ENCODE measurements at regions of chr2 and their contacts with region 1.

Region 1: GRCh38 chr2:217510771-217511291 is 492.0 kb downstream of the TNS1 start:
- H3K4me3 ChIP-seq: no peak overlapping the region
- H3K27ac ChIP-seq: no peak overlapping the region
- H3K4me1 ChIP-seq: no peaks in the 10 kb centered on the region
- CTCF ChIP-seq: peak; percentile 89

Region 2: GRCh38 chr2:216692636-216693413 is 818.0 kb before region 1 on chr2:
- CTCF ChIA-PET with region 1: interaction called, 11 read pairs
- POLR2A ChIA-PET with region 1: no interaction called
- H3K4me3 ChIP-seq: peak overlapping the region; percentile 56
- H3K27ac ChIP-seq: peak overlapping the region; percentile 92
- H3K4me1 ChIP-seq: peaks cover 36% of the 10 kb centered on the region
- CTCF ChIP-seq: no peak

Region 3: GRCh38 chr2:217142649-217143266 is 368.1 kb before region 1 on chr2:
- CTCF ChIA-PET with region 1: interaction called, 11 read pairs
- POLR2A ChIA-PET with region 1: no interaction called
- H3K4me3 ChIP-seq: no peak overlapping the region
- H3K27ac ChIP-seq: no peak overlapping the region
- H3K4me1 ChIP-seq: no peaks in the 10 kb centered on the region
- CTCF ChIP-seq: no peak

Region 4: DNA sequence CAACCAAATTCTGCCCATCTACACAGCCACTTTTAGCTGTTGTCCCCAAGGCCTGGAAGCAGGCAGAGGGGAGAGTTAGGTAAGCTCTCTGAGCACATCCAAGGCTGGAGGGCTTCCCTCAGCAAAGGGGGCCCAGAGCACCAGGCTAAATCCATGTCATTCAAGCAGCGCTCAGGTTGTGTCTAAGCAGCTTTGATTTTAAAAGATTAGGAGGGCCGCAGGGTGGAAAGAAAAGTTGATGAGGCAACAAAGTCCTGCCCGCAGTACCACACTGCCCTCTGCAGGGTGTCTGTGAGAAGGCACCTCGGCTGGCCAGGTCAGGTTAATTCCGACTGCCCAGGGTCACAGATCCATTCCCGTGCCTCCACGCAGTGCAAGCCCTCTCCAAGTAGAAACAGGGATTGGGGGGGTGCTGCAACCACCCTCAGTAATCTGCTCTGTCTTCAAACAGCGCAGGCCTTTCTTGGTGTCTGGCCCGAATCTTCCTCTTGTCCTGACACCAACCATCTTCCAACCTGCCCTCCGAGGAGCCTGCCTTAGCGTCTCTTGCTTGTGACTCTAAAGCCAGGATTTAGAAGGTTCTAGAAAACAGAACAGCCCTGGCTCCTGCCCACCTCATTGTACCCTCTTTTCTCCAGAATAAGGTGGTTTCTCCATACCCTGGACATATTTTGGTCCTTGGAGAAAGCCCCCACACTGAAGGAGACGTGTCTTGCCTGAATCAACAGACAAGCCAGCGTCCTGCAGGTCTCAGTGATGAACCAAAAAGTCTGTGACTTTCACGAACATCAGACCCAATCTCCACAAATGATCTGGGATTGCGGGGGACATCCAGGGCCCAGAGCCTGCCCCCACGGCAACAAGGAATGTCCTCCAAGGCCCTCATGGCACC is 202.8 kb after region 1 on chr2:
- CTCF ChIA-PET with region 1: interaction called, 22 read pairs
- POLR2A ChIA-PET with region 1: interaction called, 3 read pairs
- H3K4me3 ChIP-seq: no peak overlapping the region
- H3K27ac ChIP-seq: no peak overlapping the region
- H3K4me1 ChIP-seq: no peaks in the 10 kb centered on the region
- CTCF ChIP-seq: peak; percentile 88

Region 5: GRCh38 chr2:217722883-217723472 is 212.1 kb after region 1 on chr2:
- CTCF ChIA-PET with region 1: no interaction called
- POLR2A ChIA-PET with region 1: interaction called, 11 read pairs
- H3K4me3 ChIP-seq: no peak overlapping the region
- H3K27ac ChIP-seq: no peak overlapping the region
- H3K4me1 ChIP-seq: no peaks in the 10 kb centered on the region
- CTCF ChIP-seq: no peak